ENCODE measurements at regions of chr4 and their contacts with region 1.

Region 1: DNA sequence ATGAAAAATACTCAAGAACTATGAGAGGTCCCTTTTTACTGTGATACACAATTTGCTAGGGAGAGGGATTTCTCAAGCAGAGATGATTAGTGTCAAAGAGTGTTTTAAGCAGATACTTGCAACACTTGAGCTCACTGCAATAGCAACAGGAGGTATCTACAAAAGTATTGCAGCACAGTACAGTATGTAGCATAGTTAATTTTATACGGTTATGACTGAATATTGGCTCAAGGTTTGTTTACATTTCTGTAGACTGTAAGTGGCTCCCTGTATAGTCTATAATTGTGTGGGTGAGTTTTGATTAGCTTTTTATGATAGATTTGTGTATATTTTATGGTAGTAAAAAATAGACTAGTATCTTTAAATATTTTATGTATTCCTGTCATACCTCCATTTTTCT is 1177.2 kb downstream of the TECRL start:
- DNase-seq: no peak
- ATAC-seq: no peak
- H3K4me3 ChIP-seq: no peak overlapping the region
- H3K4me3 Mint-ChIP-seq: no peak overlapping the region
- H3K27ac ChIP-seq: no peak overlapping the region
- H3K27ac Mint-ChIP-seq: no peak overlapping the region
- H3K4me1 ChIP-seq: no peaks in the 10 kb centered on the region
- H3K4me1 Mint-ChIP-seq: no peaks in the 10 kb centered on the region
- H3K27me3 ChIP-seq: no peaks in the 10 kb centered on the region
- H3K27me3 Mint-ChIP-seq: no peaks in the 10 kb centered on the region

Region 2: GRCh38 chr4:63275491-63275890 is 43.4 kb after region 1 on chr4:
- CTCF ChIA-PET with region 1: no interaction called
- POLR2A ChIA-PET with region 1: no interaction called
- intact Hi-C with region 1: loop called in 1 of 2 experiments (anchors 10 kb)
- DNase-seq: no peak
- ATAC-seq: no peak
- H3K4me3 ChIP-seq: no peak overlapping the region
- H3K4me3 Mint-ChIP-seq: no peak overlapping the region
- H3K27ac ChIP-seq: no peak overlapping the region
- H3K27ac Mint-ChIP-seq: no peak overlapping the region
- H3K4me1 ChIP-seq: no peaks in the 10 kb centered on the region
- H3K4me1 Mint-ChIP-seq: no peaks in the 10 kb centered on the region
- H3K27me3 ChIP-seq: no peaks in the 10 kb centered on the region
- H3K27me3 Mint-ChIP-seq: no peaks in the 10 kb centered on the region

Region 3: GRCh38 chr4:63693321-63693720 is 461.3 kb after region 1 on chr4:
- CTCF ChIA-PET with region 1: no interaction called
- POLR2A ChIA-PET with region 1: no interaction called
- intact Hi-C with region 1: no loop called
- DNase-seq: no peak
- ATAC-seq: no peak
- H3K4me3 ChIP-seq: no peak overlapping the region
- H3K4me3 Mint-ChIP-seq: no peak overlapping the region
- H3K27ac ChIP-seq: no peak overlapping the region
- H3K27ac Mint-ChIP-seq: no peak overlapping the region
- H3K4me1 ChIP-seq: no peaks in the 10 kb centered on the region
- H3K4me1 Mint-ChIP-seq: no peaks in the 10 kb centered on the region
- H3K27me3 ChIP-seq: no peaks in the 10 kb centered on the region
- H3K27me3 Mint-ChIP-seq: no peaks in the 10 kb centered on the region

Measured in naive thymus-derived CD4-positive, alpha-beta T cell (primary cell).